Upper lobe of right lung (tissue), 1 donor: ENCODE measurements at regions of chr11 and their contacts with region 1.

Region 1: DNA sequence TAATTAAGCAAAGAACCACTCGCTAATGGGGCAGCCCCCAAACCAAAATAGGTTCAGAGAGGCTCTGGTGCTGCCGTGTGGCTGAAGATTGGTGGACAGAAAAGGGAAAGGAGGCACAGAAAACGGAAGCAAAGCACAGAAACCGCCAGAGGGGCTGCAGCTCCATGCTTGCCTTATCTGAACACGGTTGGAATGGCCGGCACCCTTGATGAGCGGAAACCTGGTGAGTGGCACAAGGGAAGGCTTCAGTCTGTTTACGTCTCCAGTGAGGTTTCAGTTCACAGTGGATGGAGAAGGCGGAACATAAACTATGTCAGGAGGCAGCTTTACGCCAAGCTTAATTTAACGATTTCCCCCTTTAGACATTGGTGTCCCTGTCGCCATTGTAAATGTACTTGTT is 5.2 kb upstream of the PRR33 start:
- DNase-seq: no peak
- ATAC-seq: peak; percentile 45
- H3K4me3 ChIP-seq: peak overlapping the region; percentile 14
- H3K27ac ChIP-seq: no peak overlapping the region
- H3K4me1 ChIP-seq: no peaks in the 10 kb centered on the region
- H3K27me3 ChIP-seq: no peaks in the 10 kb centered on the region
- CTCF ChIP-seq: no peak

Region 2: GRCh38 chr11:1916986-1917670 is 20.2 kb after region 1 on chr11:
- intact Hi-C with region 1: loop called (anchors 1 kb)
- DNase-seq: peak; percentile 56
- ATAC-seq: peak; percentile 7
- H3K4me3 ChIP-seq: no peak overlapping the region
- H3K27ac ChIP-seq: no peak overlapping the region
- H3K4me1 ChIP-seq: no peaks in the 10 kb centered on the region
- H3K27me3 ChIP-seq: no peaks in the 10 kb centered on the region
- CTCF ChIP-seq: no peak

Region 3: DNA sequence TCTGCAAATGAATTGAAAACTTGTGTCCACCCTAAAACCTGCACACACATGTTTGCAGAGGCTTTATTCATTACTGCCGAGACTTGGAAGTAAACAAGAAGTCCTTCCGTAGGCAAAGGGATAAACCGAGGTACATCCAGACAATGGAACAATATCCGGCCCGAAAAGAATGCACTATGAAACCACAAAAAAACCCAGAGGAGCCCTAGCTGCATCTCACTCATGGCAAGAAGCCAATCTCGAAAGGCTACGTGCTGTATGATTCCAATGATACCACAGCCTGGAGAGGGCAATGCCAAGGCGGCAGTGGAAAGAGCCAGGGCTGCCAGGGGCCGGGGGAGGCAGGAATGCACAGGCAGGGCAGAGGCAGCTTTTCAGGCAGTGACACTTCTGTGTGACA is 47.1 kb after region 1 on chr11:
- intact Hi-C with region 1: loop called (anchors 5 kb)
- DNase-seq: peak; percentile 54
- ATAC-seq: no peak
- H3K4me3 ChIP-seq: no peak overlapping the region
- H3K27ac ChIP-seq: no peak overlapping the region
- H3K4me1 ChIP-seq: no peaks in the 10 kb centered on the region
- H3K27me3 ChIP-seq: peaks cover 3% of the 10 kb centered on the region
- CTCF ChIP-seq: no peak